Right ventricle myocardium inferior (tissue), 1 donor: ENCODE measurements at regions of chr21 and their contacts with region 1.

Region 1: GRCh38 chr21:14864211-14865021 is 200.4 kb downstream of the NRIP1 start:
- DNase-seq: peak; percentile 73
- ATAC-seq: peak; percentile 85

Region 2: DNA sequence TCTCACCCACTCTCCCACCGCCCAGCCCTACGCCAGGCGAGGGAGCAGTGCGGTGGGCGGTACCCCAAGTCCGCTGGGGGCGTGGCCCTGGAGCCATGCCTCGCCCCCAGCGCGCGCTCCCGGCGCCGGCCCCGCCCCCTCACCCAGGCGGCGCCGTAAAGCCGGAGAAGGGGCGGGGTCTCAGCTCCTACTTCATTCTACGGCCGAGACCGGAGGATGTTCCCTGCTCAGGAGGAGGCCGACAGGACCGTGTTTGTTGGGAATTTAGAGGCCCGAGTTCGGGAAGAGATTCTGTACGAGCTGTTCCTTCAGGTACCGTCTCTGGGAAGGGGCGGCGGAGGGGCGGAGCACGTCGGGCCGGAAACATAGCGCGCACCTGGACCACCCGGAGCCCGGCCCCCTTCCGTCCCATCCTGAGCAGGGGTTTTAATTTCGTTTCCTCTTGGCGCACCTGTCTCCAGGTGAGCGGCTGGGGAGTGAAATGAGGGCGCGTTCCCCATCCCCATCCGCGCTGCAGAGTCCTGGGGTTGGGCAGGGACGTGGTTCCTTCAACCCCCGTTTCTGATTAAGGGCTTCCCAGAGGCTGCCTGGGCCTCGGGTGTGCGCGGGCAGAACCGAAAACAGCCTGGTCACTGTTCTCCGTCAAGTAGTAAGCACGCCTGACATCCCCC is 648.3 kb before region 1 on chr21 and contains the start of gene RBM11:
- intact Hi-C with region 1: no loop called
- DNase-seq: peak; percentile 85
- ATAC-seq: peak; percentile 92
- total RNA-seq, gene RBM11: 0.14 TPM

Region 3: GRCh38 chr21:14259747-14260146 is 604.7 kb before region 1 on chr21:
- intact Hi-C with region 1: loop called (anchors 10 kb)
- DNase-seq: no peak
- ATAC-seq: no peak

Region 4: DNA sequence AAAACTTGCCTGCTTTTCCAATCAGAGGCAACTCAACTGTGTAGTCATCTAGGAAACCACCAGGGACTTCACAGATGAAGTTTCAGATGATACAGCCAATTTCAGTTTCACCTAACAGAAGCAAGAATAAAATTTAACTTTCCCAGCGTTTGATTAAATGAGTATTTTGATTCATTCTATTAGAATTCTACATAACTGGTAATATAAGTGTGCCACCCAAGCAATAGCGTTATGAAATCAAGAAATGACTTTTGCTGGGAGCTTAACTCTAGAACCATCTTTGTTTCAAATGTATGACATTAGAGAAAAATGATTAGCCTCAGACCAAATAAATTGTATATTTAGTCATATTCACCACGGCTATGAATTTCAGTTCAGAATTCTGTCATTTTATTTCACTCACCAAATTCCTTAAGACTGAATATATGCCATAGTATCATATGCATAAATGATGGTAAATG is 38.9 kb before region 1 on chr21:
- intact Hi-C with region 1: no loop called
- DNase-seq: no peak
- ATAC-seq: no peak

Region 5: GRCh38 chr21:15483138-15483780 is 618.8 kb after region 1 on chr21:
- intact Hi-C with region 1: loop called (anchors 1 kb)
- DNase-seq: peak; percentile 89
- ATAC-seq: peak; percentile 99